ENCODE measurements at regions of chr12 and their contacts with region 1.

Region 1: GRCh38 chr12:22121227-22121626 is 75.2 kb downstream of the CMAS start:
- DNase-seq: peak in 3 of 5 donors; percentile 7 to 58 (median 16)
- H3K4me3 ChIP-seq: no peak overlapping the region
- H3K4me3 Mint-ChIP-seq: no peak overlapping the region
- H3K27ac ChIP-seq: no peak overlapping the region
- H3K27ac Mint-ChIP-seq: peak overlapping the region in 1 of 8 donors; percentile 77
- H3K4me1 ChIP-seq: no peaks in the 10 kb centered on the region
- H3K4me1 Mint-ChIP-seq: peaks cover 0 to 3% (median 0%) of the 10 kb centered on the region in 3 donors
- H3K27me3 ChIP-seq: no peaks in the 10 kb centered on the region
- H3K27me3 Mint-ChIP-seq: peaks cover 0 to 4% of the 10 kb centered on the region in 2 donors

Region 2: GRCh38 chr12:22100958-22101748 is 20.1 kb before region 1 on chr12:
- CTCF ChIA-PET with region 1: interaction called, 10 read pairs
- POLR2A ChIA-PET with region 1: no interaction called
- DNase-seq: peak in 3 of 5 donors; percentile 16 to 61 (median 47)
- H3K4me3 ChIP-seq: no peak overlapping the region
- H3K4me3 Mint-ChIP-seq: peak overlapping the region in 1 of 7 donors; percentile 40
- H3K27ac ChIP-seq: no peak overlapping the region
- H3K27ac Mint-ChIP-seq: no peak overlapping the region
- H3K4me1 ChIP-seq: peaks cover 10% of the 10 kb centered on the region
- H3K4me1 Mint-ChIP-seq: peaks cover 6 to 11% (median 8%) of the 10 kb centered on the region in 3 donors
- H3K27me3 ChIP-seq: no peaks in the 10 kb centered on the region
- H3K27me3 Mint-ChIP-seq: no peaks in the 10 kb centered on the region

Region 3: DNA sequence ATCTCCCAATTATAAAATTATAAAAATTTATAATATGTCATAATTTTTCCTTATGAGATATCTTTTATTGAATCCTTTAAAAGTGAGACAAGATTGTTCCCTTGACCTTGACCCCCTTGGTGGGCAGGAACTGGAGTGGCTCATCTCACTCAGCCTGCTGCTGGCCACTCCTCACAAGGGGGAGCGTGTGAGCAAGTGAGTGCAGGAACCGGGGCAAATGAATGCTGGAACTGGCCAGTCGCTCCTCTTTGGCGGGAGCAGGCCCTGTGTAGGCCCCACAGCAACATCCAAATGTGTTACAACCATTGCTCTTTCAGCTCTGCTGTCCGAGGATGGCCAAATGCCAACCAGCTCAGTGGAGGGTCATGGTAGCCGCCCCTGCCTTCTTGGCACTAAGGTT is 682.5 kb after region 1 on chr12:
- CTCF ChIA-PET with region 1: no interaction called
- POLR2A ChIA-PET with region 1: no interaction called
- DNase-seq: no peak
- H3K4me3 ChIP-seq: no peak overlapping the region
- H3K4me3 Mint-ChIP-seq: no peak overlapping the region
- H3K27ac ChIP-seq: no peak overlapping the region
- H3K27ac Mint-ChIP-seq: no peak overlapping the region
- H3K4me1 ChIP-seq: no peaks in the 10 kb centered on the region
- H3K4me1 Mint-ChIP-seq: no peaks in the 10 kb centered on the region
- H3K27me3 ChIP-seq: no peaks in the 10 kb centered on the region
- H3K27me3 Mint-ChIP-seq: peaks cover 0 to 11% of the 10 kb centered on the region in 2 donors

Measured in CD8-positive, alpha-beta memory T cell (primary cell).